ENCODE measurements at regions of chr17 and their contacts with region 1.

Region 1: DNA sequence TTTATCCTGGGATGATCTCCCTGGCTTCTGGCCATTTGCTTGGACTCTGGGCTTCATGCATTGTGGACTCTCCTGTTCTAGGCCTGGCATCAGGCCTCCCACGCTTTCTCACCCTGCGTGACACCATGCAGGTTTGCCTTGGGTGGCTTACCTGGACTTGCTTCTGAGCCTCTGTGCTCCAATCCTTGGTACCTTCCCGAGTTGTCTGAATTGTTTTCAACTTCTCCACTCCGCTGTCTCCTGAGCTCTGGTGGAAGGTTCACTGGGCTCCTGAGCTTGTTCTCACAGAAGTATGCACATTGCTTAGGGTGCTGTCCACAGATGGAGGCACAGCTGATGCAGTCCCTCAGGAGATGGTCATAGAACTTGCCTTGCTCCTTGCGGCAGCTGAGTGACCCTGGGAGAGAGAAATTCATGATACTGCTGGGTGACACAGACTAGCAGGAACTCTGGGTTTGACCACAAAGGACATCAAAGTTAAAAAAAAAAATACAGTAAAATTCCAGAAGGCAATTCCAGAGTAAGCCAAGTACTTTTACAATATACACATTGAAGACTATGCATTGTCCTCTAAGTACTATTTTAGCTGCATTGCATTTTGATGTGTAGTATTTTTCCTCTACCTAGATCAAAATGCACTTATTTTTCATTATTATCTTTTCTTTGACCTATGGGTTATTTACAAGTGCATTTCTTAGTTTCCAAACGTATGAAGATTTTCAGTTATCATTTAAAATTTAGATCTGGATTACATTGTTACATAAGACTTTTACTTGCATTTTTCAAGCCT is 23.1 kb downstream of the TNFRSF13B start:
- DNase-seq: no peak
- ATAC-seq: no peak
- H3K4me3 ChIP-seq: no peak overlapping the region
- H3K4me3 Mint-ChIP-seq: no peak overlapping the region
- H3K27ac ChIP-seq: no peak overlapping the region
- H3K27ac Mint-ChIP-seq: no peak overlapping the region
- H3K4me1 ChIP-seq: no peaks in the 10 kb centered on the region
- H3K4me1 Mint-ChIP-seq: no peaks in the 10 kb centered on the region
- H3K27me3 ChIP-seq: peaks cover 0 to 43% of the 10 kb centered on the region in 2 experiments
- H3K27me3 Mint-ChIP-seq: peaks cover 19 to 26% of the 10 kb centered on the region in 2 donors

Region 2: DNA sequence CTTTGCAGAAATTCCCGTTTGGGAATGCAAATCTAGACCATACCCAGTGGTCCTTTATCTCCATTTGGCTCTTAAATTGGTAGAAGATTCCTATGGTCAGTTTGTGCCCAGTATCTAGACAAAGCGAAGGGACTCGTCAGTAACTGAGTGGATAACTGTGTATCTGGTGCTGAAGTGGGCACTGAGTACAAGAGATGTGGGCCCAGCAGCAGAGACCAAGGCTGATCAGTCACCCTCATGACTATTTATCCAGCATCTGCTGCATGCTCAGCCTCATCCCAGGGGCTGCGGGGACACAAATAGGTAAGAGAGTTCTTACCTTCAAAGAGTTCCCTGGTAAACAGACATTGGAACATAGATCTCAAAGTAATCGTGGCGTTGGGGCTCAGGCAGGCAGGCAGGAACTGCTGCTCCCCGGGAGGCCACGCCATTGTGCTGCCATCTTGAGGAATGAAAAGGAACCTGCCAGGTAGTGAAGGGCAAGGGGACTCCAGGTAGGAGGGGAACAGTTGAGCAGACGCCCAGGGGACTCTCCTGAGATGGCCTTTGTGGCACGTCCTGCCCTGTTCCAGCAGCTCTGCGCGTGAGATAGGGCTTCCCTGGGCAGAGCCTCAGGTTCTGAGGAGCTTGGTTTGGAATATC is 364.7 kb after region 1 on chr17:
- CTCF ChIA-PET with region 1: no interaction called
- POLR2A ChIA-PET with region 1: interaction called in 1 of 2 experiments, 10 read pairs
- DNase-seq: peak; percentile 56 to 85 (median 70)
- ATAC-seq: peak; percentile 98 to 100 (median 99)
- H3K4me3 ChIP-seq: no peak overlapping the region
- H3K4me3 Mint-ChIP-seq: no peak overlapping the region
- H3K27ac ChIP-seq: no peak overlapping the region
- H3K27ac Mint-ChIP-seq: no peak overlapping the region
- H3K4me1 ChIP-seq: peaks cover 0 to 5% of the 10 kb centered on the region in 2 experiments
- H3K4me1 Mint-ChIP-seq: peaks cover 2 to 6% (median 5%) of the 10 kb centered on the region in 3 donors
- H3K27me3 ChIP-seq: no peaks in the 10 kb centered on the region
- H3K27me3 Mint-ChIP-seq: no peaks in the 10 kb centered on the region